ENCODE measurements at regions of chr1 and their contacts with region 1.

Region 1: DNA sequence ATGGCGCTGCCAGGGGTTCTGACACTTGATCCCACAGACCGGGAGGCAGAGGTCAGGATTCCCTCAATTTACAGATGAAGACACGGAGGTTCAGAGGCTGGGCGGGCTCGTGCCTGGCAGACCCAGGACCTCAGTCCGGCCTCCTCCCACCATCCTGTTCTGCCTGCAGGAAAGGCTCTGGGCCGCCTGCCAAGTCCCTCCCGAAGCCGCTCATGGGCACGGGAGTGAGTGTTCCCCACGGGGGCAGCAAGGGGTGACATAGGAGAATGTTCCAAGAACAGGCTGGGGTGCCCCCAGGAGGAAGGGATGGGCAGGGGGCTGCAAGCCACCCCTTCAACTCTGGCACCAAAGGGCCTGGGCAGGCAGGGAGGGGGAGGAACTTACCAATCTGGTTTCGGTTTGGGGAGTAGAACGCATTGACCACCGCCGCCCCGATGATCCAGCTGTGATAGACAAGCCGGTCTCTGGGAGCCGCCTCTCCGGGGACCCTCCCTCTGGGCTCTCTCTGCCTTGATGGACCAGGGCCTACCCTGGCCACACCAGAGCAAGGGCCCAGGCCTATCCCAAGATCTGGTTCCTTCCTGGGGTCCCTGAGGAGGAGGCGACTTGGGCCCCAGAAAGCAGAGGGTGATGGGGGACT is 7.5 kb downstream of the PRXL2B start:
- DNase-seq: peak; percentile 68 to 77
- ATAC-seq: peak in 6 of 8 donors; percentile 19 to 78 (median 64)
- H3K4me3 ChIP-seq: peak overlapping the region in 9 of 10 donors; percentile 6 to 51 (median 34)
- H3K27ac ChIP-seq: peak overlapping the region in 1 of 10 donors; percentile 6
- H3K4me1 ChIP-seq: peaks cover 0 to 16% (median 11%) of the 10 kb centered on the region in 9 donors
- H3K27me3 ChIP-seq: peaks cover 0 to 26% (median 0%) of the 10 kb centered on the region in 7 donors
- CTCF ChIP-seq: no peak

Region 2: DNA sequence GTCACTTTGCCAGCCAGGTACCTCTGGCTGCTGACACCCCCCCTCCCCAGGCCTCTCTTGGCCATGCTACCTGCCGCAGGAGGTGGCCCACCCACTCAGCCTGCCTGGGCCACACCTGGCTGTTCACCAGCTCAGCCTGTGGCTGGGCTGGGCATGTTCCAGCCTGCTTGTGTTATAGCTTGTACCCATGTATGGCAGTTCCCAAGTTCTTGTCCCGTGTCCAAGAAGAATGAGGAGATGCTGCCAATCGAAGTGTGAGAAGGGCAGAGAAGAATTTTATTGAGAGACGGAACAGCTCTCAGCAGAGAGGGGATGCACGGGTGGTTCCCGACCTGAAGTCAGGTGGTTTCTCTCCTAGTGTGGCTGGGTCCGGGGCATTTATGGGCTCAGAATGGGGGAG is 42.6 kb after region 1 on chr1:
- intact Hi-C with region 1: loop called in 4 of 10 experiments (anchors 5 to 10 kb)
- DNase-seq: no peak
- ATAC-seq: no peak
- H3K4me3 ChIP-seq: no peak overlapping the region
- H3K27ac ChIP-seq: no peak overlapping the region
- H3K4me1 ChIP-seq: peaks cover 2 to 17% (median 13%) of the 10 kb centered on the region in 9 donors
- H3K27me3 ChIP-seq: peaks cover 5 to 31% (median 27%) of the 10 kb centered on the region in 7 donors
- CTCF ChIP-seq: no peak